OCI-LY7 (cell line): ENCODE measurements at regions of chr15 and their contacts with region 1.

Region 1: DNA sequence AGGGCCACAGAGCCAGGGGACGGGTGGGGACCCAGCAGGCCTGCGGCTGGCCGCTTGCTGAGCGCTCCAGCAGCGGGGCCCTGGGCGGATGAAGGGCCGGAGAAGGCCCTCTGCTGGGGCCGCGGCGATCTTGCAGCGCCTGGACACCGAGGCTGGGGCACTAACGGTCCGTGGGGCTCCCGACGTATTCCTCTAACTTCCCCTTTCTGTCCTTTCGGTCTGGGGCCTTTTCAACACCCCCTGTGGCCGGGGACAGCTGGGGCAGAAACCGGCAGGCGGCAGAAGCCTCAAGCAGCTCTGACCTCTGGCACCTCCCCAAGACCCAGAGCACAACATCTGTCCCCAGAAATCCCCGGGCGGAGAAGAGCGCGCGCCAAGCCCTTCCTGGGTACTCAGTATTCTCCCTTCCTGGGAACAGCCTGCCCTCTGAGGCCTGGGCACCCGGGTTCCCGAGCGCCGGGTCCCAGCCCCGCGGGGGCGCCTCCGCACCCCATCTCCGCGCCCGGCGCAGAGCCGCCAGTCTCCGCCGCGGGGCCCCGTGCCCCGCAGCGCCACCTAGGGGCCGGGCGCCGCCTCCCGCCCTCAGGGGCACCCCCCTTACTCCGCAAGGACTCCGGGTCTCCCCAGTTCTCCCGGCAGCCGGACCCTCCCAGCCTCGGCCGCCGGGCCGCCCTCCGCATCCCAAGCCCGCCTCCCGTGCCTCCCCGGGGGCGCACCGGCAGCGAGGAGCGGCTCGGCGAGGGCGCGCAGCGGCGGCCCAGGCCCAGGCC is 582 bp upstream of the SLCO3A1 start:
- DNase-seq: peak; percentile 86
- H3K4me3 ChIP-seq: peak overlapping the region; percentile 84
- H3K27ac ChIP-seq: peak overlapping the region; percentile 95
- H3K4me1 ChIP-seq: peaks cover 34% of the 10 kb centered on the region
- CTCF ChIP-seq: peak; percentile 87

Region 2: GRCh38 chr15:91706322-91707032 is 146.4 kb before region 1 on chr15:
- CTCF ChIA-PET with region 1: no interaction called
- POLR2A ChIA-PET with region 1: no interaction called
- intact Hi-C with region 1: loop called (anchors 5 kb)
- DNase-seq: peak; percentile 68
- H3K4me3 ChIP-seq: no peak overlapping the region
- H3K27ac ChIP-seq: no peak overlapping the region
- H3K4me1 ChIP-seq: no peaks in the 10 kb centered on the region
- CTCF ChIP-seq: peak; percentile 95

Region 3: GRCh38 chr15:91801836-91802534 is 50.9 kb before region 1 on chr15:
- CTCF ChIA-PET with region 1: no interaction called
- POLR2A ChIA-PET with region 1: no interaction called
- intact Hi-C with region 1: no loop called
- DNase-seq: no peak
- H3K4me3 ChIP-seq: no peak overlapping the region
- H3K27ac ChIP-seq: no peak overlapping the region
- H3K4me1 ChIP-seq: no peaks in the 10 kb centered on the region
- CTCF ChIP-seq: no peak

Region 4: GRCh38 chr15:91915576-91915975 is 62.6 kb after region 1 on chr15:
- CTCF ChIA-PET with region 1: no interaction called
- POLR2A ChIA-PET with region 1: interaction called, 3 read pairs
- intact Hi-C with region 1: loop called (anchors 2 kb)
- DNase-seq: peak; percentile 82
- H3K4me3 ChIP-seq: peak overlapping the region; percentile 42
- H3K27ac ChIP-seq: peak overlapping the region; percentile 90
- H3K4me1 ChIP-seq: peaks cover 87% of the 10 kb centered on the region
- CTCF ChIP-seq: no peak

Region 5: DNA sequence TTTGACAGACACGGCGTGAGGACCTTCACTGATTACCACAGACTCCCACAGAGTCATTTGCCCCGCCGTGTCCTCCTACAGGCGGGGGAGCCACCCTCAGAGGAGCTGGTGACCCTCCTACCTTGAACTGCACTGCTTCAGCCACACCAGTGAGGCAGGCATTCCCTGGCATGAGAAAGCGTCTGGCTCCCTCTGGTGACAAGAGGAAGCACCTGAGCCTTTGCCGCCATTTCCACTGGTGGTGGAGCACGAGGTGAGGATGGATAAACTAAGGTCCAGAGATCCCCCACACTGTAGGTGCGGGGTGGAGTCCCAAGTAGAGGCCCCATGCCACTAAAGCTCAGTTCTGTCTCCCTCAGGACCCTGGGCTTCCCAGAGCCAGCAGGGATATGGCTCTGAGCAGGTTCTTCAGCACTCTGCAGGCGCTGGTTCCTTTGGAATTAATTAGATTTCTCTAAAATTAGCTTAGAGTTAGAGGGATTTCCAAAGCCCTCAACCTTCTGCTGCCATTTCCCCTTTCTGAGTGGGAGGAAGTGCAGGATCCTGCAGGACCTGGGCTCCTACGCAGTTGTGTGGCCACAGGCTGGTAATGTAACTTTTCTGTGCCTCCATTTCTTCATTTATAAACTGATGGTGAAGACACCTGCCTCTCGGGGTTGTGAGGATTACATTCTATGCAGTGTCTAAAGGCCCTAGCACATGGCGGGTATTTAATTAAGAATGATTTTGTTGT is 224.6 kb after region 1 on chr15:
- CTCF ChIA-PET with region 1: no interaction called
- POLR2A ChIA-PET with region 1: interaction called, 3 read pairs
- intact Hi-C with region 1: loop called (anchors 1 kb)
- DNase-seq: peak; percentile 83
- H3K4me3 ChIP-seq: no peak overlapping the region
- H3K27ac ChIP-seq: no peak overlapping the region
- H3K4me1 ChIP-seq: peaks cover 29% of the 10 kb centered on the region
- CTCF ChIP-seq: peak; percentile 87